ENCODE measurements at regions of chr11 and their contacts with region 1.

Region 1: GRCh38 chr11:65575568-65576231 is at the start of gene EHBP1L1:
- DNase-seq: peak in 1 of 2 donors; percentile 93
- H3K4me3 ChIP-seq: peak within 1 kb of the TSS; percentile 49
- CTCF ChIP-seq: no peak
- POLR2A ChIP-seq: no peak
- total RNA-seq, gene EHBP1L1: 40.5 to 71.0 (median 57.3) TPM

Region 2: DNA sequence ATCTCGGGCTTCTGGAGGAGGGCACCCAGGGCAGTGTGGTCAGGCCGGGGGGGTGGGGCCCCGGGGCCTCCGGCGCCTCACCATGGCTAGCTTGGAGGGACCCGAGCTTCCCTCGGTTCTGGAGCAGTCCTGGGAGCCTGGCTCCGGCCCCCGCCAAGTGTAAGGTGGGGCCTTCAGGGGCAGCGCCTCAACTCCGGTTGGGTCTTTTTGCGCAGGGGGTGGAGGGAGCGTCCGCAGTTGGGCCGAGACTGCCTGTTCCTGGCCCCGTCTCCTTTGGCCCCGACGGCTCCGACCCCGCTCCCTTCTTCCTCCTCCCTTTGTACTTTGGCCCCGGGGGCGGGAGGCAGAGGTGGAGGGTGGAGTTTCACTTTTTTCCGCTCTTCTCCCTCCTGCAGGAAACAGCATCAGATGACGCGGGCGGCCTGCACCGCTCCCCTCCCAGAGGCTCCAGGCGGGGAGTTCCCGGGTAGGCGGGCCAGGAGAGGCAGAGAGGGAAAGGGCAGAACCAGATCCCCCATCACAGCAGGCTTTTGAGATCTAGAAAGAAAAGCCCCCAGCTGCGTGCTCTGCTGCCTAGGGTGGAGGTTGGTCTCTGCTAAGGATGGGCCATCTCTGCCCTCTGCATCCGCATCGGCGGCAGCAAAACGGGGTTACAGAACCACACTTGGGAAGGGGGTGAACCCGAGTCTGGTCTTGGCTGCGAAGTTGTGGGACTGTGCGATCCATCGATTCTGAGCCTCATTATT is 38.4 kb after region 1 on chr11 and contains the start of gene MAP3K11:
- intact Hi-C with region 1: loop called (anchors 5 kb)
- DNase-seq: peak; percentile 96 to 99
- H3K4me3 ChIP-seq: peak within 1 kb of the TSS; percentile 57
- CTCF ChIP-seq: no peak
- POLR2A ChIP-seq: no peak
- total RNA-seq, gene MAP3K11: 31.6 to 40.0 (median 39.1) TPM

Region 3: GRCh38 chr11:65680192-65680743 is 104.6 kb after region 1 on chr11:
- intact Hi-C with region 1: no loop called
- DNase-seq: no peak
- H3K4me3 ChIP-seq: no peak overlapping the region
- CTCF ChIP-seq: no peak
- POLR2A ChIP-seq: no peak

Region 4: GRCh38 chr11:66069715-66070603 is 494.3 kb after region 1 on chr11 and contains the start of gene PACS1:
- intact Hi-C with region 1: no loop called
- DNase-seq: peak; percentile 47 to 93
- H3K4me3 ChIP-seq: peak within 1 kb of the TSS; percentile 88
- CTCF ChIP-seq: no peak
- POLR2A ChIP-seq: no peak
- total RNA-seq, gene PACS1: 26.7 to 41.1 (median 32.4) TPM